ENCODE measurements at regions of chr2 and their contacts with region 1.

Region 1: DNA sequence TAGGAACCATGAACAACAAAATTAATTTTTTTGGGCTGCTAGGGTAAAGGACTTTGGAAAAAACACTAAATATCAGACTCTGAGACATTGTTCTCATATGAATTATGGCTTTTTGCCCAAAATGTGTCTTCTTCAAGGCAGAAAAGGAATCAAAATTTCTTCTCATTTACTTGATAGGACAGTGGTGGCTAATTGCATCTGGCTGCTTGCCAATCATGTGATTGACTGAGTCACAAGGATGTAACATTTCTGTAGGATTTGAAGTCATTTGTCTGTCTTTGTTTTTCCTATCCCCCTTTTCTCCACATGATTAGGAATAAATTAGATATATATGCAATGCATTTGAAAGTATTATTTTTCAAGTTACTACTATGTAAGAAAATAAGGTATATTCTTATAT is 130.2 kb downstream of the SLC4A10 start:
- DNase-seq: no peak
- H3K4me3 ChIP-seq: no peak overlapping the region
- CTCF ChIP-seq: no peak

Region 2: DNA sequence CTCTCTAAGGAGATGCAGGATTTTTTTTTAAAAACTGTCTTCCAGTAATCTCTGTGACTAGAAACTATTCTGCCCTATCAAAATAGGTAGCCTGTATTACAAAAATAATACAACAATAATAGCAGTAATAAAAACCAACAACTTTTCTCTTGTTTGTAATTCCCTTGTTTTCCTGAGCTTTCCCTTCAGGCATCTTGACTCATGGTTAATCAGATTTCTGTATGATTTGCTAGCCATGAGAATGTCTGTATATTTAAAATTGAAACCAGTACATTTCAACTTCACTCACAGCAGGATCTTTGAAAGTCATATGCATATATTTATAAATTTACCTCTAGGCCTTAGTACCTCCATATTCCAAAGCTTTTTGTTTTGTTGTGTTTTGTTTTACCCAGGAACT is 92.0 kb before region 1 on chr2:
- in situ Hi-C with region 1: loop called (anchors 5 kb)
- DNase-seq: no peak
- H3K4me3 ChIP-seq: no peak overlapping the region
- CTCF ChIP-seq: no peak